ENCODE measurements at regions of chr14 and their contacts with region 1.

Region 1: DNA sequence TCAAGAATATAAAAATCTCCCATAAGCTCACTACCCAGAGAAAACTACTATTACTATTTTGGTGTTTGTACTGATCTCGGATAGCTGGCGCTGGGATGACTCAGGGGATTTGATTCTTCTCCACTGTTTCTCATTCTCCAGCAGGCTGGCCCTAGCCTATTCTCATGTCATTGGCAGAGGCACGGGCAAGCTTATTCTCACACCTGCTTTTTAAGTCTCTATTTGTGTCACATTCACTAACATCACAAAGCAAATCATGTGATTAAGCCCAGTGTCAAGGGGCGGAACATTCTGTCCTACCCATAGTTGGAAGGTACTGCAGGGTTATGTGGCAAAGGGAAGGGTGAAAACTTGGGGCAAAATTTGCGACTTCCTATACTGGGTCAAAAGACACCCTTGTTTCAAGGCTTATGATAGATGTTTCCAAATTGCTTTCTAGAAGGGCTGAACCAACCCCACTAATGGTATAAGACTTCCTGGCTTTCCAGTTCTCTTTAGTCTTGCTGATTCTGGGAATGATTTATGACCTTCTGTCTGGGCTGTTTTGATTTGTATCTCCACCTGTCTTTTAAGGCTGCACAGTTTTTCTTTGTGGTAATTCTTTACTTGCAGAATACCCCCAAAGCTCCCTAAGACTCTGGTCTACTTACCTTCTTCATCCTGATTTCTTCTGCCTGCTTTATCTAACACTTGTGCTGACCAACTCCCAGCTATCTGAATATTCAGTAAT is 406.4 kb downstream of the NRXN3 start:
- DNase-seq: no peak
- H3K4me3 ChIP-seq: no peak overlapping the region
- H3K4me3 Mint-ChIP-seq: no peak overlapping the region
- H3K27ac ChIP-seq: no peak overlapping the region
- H3K27ac Mint-ChIP-seq: no peak overlapping the region
- H3K4me1 ChIP-seq: no peaks in the 10 kb centered on the region
- H3K4me1 Mint-ChIP-seq: no peaks in the 10 kb centered on the region
- H3K27me3 ChIP-seq: no peaks in the 10 kb centered on the region
- H3K27me3 Mint-ChIP-seq: no peaks in the 10 kb centered on the region

Region 2: DNA sequence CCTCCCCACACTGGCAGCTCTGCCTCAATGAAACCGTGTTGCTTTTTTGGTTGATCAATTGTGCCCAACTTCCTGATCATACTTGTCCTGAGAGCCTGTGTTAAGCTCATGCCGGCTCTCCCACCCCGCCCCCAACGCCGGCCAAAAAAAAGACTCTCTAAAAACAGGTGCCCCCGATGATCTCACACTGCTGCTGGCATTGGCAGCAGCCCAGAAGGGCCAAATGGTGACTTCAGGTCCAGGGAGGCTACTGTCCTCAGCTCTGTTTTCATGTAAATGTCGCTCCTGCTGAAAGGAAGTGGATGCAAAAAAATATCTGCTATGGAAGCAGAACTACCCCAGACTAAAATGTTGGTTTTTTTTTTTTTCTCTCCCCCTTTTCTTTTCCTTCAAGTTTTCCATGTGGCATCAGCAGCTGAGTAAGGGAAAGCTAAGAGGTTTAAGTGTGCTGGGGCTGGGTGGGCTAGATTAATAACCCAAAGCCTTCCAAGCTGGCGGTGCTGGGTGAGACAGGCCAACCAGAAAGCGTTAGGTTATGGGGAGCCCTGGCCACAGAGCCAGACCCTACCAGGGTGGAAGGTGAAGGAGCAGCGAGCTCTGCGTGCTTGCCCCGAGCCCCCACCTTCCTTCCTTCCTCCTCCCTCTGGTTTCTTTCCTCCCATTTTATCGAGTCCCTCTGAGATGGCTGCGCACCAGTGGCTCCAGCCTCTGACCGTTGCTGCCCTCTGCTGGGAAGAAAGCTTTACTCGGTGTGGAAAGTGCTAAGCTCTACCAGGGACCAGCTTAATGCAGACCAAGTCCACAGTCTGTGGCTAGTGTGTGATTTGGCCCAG is 10.4 kb before region 1 on chr14:
- CTCF ChIA-PET with region 1: interaction called, 24 read pairs
- POLR2A ChIA-PET with region 1: no interaction called
- intact Hi-C with region 1: no loop called
- DNase-seq: peak; percentile 21 to 40 (median 27)
- H3K4me3 ChIP-seq: no peak overlapping the region
- H3K4me3 Mint-ChIP-seq: peak overlapping the region in 6 of 8 donors; percentile 15 to 66 (median 40)
- H3K27ac ChIP-seq: no peak overlapping the region
- H3K27ac Mint-ChIP-seq: peak overlapping the region in 3 of 7 donors; percentile 15 to 62 (median 17)
- H3K4me1 ChIP-seq: no peaks in the 10 kb centered on the region
- H3K4me1 Mint-ChIP-seq: peaks cover 0 to 2% (median 0%) of the 10 kb centered on the region in 4 donors
- H3K27me3 ChIP-seq: no peaks in the 10 kb centered on the region
- H3K27me3 Mint-ChIP-seq: no peaks in the 10 kb centered on the region

Measured in CD4-positive, alpha-beta memory T cell (primary cell).